ENCODE measurements at regions of chr10 and their contacts with region 1.

Region 1: GRCh38 chr10:33193057-33193700 is 141.3 kb downstream of the NRP1 start:
- DNase-seq: peak; percentile 25 to 84 (median 69)
- ATAC-seq: peak; percentile 58
- H3K4me3 ChIP-seq: no peak overlapping the region
- H3K4me3 Mint-ChIP-seq: no peak overlapping the region
- H3K27ac ChIP-seq: no peak overlapping the region
- H3K27ac Mint-ChIP-seq: no peak overlapping the region
- H3K4me1 ChIP-seq: no peaks in the 10 kb centered on the region
- H3K4me1 Mint-ChIP-seq: no peaks in the 10 kb centered on the region
- H3K27me3 ChIP-seq: no peaks in the 10 kb centered on the region
- H3K27me3 Mint-ChIP-seq: peaks cover 4% of the 10 kb centered on the region
- CTCF ChIP-seq: peak; percentile 59

Region 2: DNA sequence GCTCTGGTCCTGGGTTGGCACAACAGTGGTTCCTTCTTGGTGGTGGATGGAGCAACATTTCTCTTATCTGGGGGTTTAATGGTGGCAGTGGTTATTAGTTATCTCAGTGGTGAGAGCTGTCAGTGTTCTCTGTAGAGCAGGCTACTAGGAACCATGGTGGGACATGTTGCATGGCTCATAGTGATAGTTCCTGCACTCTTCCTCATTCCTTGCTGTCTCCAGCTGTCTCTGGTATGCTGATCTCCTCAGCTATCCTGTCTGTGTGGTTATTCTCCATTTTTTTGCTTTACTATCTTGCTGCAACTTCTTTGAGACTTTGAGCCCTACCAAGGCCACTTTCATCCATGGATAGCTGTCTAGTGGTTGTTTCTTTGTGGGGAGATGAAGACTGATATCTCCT is 703.3 kb before region 1 on chr10:
- CTCF ChIA-PET with region 1: no interaction called
- POLR2A ChIA-PET with region 1: no interaction called
- intact Hi-C with region 1: no loop called
- DNase-seq: no peak
- ATAC-seq: no peak
- H3K4me3 ChIP-seq: no peak overlapping the region
- H3K4me3 Mint-ChIP-seq: no peak overlapping the region
- H3K27ac ChIP-seq: no peak overlapping the region
- H3K27ac Mint-ChIP-seq: peak overlapping the region; percentile 16
- H3K4me1 ChIP-seq: no peaks in the 10 kb centered on the region
- H3K4me1 Mint-ChIP-seq: peaks cover 20% of the 10 kb centered on the region
- H3K27me3 ChIP-seq: no peaks in the 10 kb centered on the region
- H3K27me3 Mint-ChIP-seq: no peaks in the 10 kb centered on the region
- CTCF ChIP-seq: no peak

Region 3: GRCh38 chr10:33180390-33180789 is 12.8 kb before region 1 on chr10:
- CTCF ChIA-PET with region 1: interaction called, 15 read pairs
- POLR2A ChIA-PET with region 1: interaction called, 3 read pairs
- intact Hi-C with region 1: no loop called
- DNase-seq: no peak
- ATAC-seq: no peak
- H3K4me3 ChIP-seq: no peak overlapping the region
- H3K4me3 Mint-ChIP-seq: no peak overlapping the region
- H3K27ac ChIP-seq: no peak overlapping the region
- H3K27ac Mint-ChIP-seq: no peak overlapping the region
- H3K4me1 ChIP-seq: no peaks in the 10 kb centered on the region
- H3K4me1 Mint-ChIP-seq: no peaks in the 10 kb centered on the region
- H3K27me3 ChIP-seq: peaks cover 0 to 3% of the 10 kb centered on the region in 2 experiments
- H3K27me3 Mint-ChIP-seq: peaks cover 18% of the 10 kb centered on the region
- CTCF ChIP-seq: no peak

Region 4: GRCh38 chr10:33204049-33204448 is 10.9 kb after region 1 on chr10:
- CTCF ChIA-PET with region 1: interaction called, 21 read pairs
- POLR2A ChIA-PET with region 1: interaction called, 6 read pairs
- intact Hi-C with region 1: no loop called
- DNase-seq: no peak
- ATAC-seq: no peak
- H3K4me3 ChIP-seq: no peak overlapping the region
- H3K4me3 Mint-ChIP-seq: no peak overlapping the region
- H3K27ac ChIP-seq: no peak overlapping the region
- H3K27ac Mint-ChIP-seq: no peak overlapping the region
- H3K4me1 ChIP-seq: no peaks in the 10 kb centered on the region
- H3K4me1 Mint-ChIP-seq: no peaks in the 10 kb centered on the region
- H3K27me3 ChIP-seq: no peaks in the 10 kb centered on the region
- H3K27me3 Mint-ChIP-seq: no peaks in the 10 kb centered on the region
- CTCF ChIP-seq: no peak

Region 5: GRCh38 chr10:33330543-33331378 is 137.6 kb after region 1 on chr10:
- CTCF ChIA-PET with region 1: interaction called, 20 read pairs
- POLR2A ChIA-PET with region 1: no interaction called
- intact Hi-C with region 1: loop called (anchors 1 to 10 kb)
- DNase-seq: peak; percentile 48 to 85 (median 74)
- ATAC-seq: peak; percentile 56
- H3K4me3 ChIP-seq: no peak overlapping the region
- H3K4me3 Mint-ChIP-seq: no peak overlapping the region
- H3K27ac ChIP-seq: no peak overlapping the region
- H3K27ac Mint-ChIP-seq: no peak overlapping the region
- H3K4me1 ChIP-seq: peaks cover 15% of the 10 kb centered on the region
- H3K4me1 Mint-ChIP-seq: peaks cover 18% of the 10 kb centered on the region
- H3K27me3 ChIP-seq: peaks cover 16 to 17% of the 10 kb centered on the region in 2 experiments
- H3K27me3 Mint-ChIP-seq: peaks cover 47% of the 10 kb centered on the region
- CTCF ChIP-seq: peak; percentile 96

Region 6: GRCh38 chr10:33509231-33509831 is 316.2 kb after region 1 on chr10:
- CTCF ChIA-PET with region 1: no interaction called
- POLR2A ChIA-PET with region 1: no interaction called
- intact Hi-C with region 1: loop called in 1 of 2 experiments (anchors 10 kb)
- DNase-seq: peak in 1 of 9 experiments; percentile 22
- ATAC-seq: no peak
- H3K4me3 ChIP-seq: no peak overlapping the region
- H3K4me3 Mint-ChIP-seq: no peak overlapping the region
- H3K27ac ChIP-seq: no peak overlapping the region
- H3K27ac Mint-ChIP-seq: no peak overlapping the region
- H3K4me1 ChIP-seq: no peaks in the 10 kb centered on the region
- H3K4me1 Mint-ChIP-seq: peaks cover 2% of the 10 kb centered on the region
- H3K27me3 ChIP-seq: no peaks in the 10 kb centered on the region
- H3K27me3 Mint-ChIP-seq: peaks cover 2% of the 10 kb centered on the region
- CTCF ChIP-seq: no peak

Region 7: GRCh38 chr10:33819206-33819605 is 626.0 kb after region 1 on chr10:
- CTCF ChIA-PET with region 1: no interaction called
- POLR2A ChIA-PET with region 1: no interaction called
- intact Hi-C with region 1: no loop called
- DNase-seq: no peak
- ATAC-seq: no peak
- H3K4me3 ChIP-seq: no peak overlapping the region
- H3K4me3 Mint-ChIP-seq: no peak overlapping the region
- H3K27ac ChIP-seq: no peak overlapping the region
- H3K27ac Mint-ChIP-seq: no peak overlapping the region
- H3K4me1 ChIP-seq: no peaks in the 10 kb centered on the region
- H3K4me1 Mint-ChIP-seq: no peaks in the 10 kb centered on the region
- H3K27me3 ChIP-seq: no peaks in the 10 kb centered on the region
- H3K27me3 Mint-ChIP-seq: no peaks in the 10 kb centered on the region
- CTCF ChIP-seq: no peak

Region 8: GRCh38 chr10:33901166-33901565 is 708.0 kb after region 1 on chr10:
- CTCF ChIA-PET with region 1: no interaction called
- POLR2A ChIA-PET with region 1: no interaction called
- intact Hi-C with region 1: no loop called
- DNase-seq: no peak
- ATAC-seq: no peak
- H3K4me3 ChIP-seq: no peak overlapping the region
- H3K4me3 Mint-ChIP-seq: no peak overlapping the region
- H3K27ac ChIP-seq: no peak overlapping the region
- H3K27ac Mint-ChIP-seq: no peak overlapping the region
- H3K4me1 ChIP-seq: no peaks in the 10 kb centered on the region
- H3K4me1 Mint-ChIP-seq: no peaks in the 10 kb centered on the region
- H3K27me3 ChIP-seq: no peaks in the 10 kb centered on the region
- H3K27me3 Mint-ChIP-seq: peaks cover 4% of the 10 kb centered on the region
- CTCF ChIP-seq: no peak

Measured in CD8-positive, alpha-beta T cell (primary cell).